ENCODE measurements at regions of chr5 and their contacts with region 1.

Region 1: DNA sequence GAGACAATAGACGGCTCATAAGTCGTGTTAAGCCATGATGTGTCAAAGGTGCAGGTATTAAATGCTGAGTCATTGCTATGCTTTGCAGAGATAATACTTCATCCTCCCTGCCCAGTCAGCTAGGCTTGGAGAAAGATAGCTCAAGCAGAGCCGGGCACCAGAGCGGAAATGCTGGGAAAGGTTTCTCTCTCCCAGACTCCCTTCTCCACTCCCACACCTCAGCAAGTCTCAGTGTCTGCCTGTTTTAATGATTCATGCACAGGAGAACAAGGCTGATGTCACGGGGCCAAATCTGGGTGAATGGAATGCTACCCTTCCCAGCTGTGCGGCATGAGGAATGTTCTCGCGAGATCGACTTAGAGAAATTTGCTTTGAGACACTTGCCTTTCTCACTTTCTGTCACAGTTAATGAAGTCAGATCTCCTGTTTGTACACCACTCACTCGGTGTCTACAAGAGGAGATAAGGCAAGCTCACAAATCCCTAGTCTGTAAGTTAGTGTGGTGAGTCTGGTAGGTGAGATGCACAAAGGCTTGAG is 204.4 kb downstream of the EFNA5 start:
- DNase-seq: no peak
- H3K4me3 ChIP-seq: no peak overlapping the region
- H3K27ac ChIP-seq: no peak overlapping the region
- H3K4me1 ChIP-seq: peaks cover 78% of the 10 kb centered on the region
- CTCF ChIP-seq: no peak

Region 2: GRCh38 chr5:107449369-107449768 is 16.9 kb before region 1 on chr5:
- CTCF ChIA-PET with region 1: no interaction called
- POLR2A ChIA-PET with region 1: interaction called, 68 read pairs
- intact Hi-C with region 1: no loop called
- DNase-seq: peak; percentile 65
- H3K4me3 ChIP-seq: peak overlapping the region; percentile 35
- H3K27ac ChIP-seq: peak overlapping the region; percentile 63
- H3K4me1 ChIP-seq: peaks cover 48% of the 10 kb centered on the region
- CTCF ChIP-seq: no peak

Region 3: DNA sequence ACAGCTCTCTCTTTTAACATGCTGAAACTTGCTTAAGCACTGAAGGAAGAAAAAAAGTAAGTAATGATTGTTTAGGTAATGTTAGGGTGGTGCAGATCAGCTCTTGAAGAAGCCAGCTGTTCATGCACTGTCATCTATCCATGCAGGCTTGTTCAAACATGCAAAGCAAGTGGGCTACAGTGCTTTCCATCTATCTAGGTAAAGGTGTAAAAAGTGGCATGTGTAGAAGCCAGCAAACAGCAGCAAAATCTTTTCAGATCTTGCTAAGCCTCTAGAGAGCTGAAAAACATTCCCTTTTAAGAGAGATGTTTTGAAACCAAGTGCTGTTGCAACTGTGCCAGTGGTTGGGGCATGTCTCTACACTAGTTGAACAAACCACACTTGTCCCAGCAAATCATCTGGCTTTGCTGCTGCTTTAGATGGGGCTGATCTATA is 10.0 kb before region 1 on chr5:
- CTCF ChIA-PET with region 1: interaction called, 4 read pairs
- POLR2A ChIA-PET with region 1: interaction called, 68 read pairs
- intact Hi-C with region 1: no loop called
- DNase-seq: no peak
- H3K4me3 ChIP-seq: no peak overlapping the region
- H3K27ac ChIP-seq: no peak overlapping the region
- H3K4me1 ChIP-seq: peaks cover 55% of the 10 kb centered on the region
- CTCF ChIP-seq: no peak

Region 4: GRCh38 chr5:107476783-107477182 is 10.5 kb after region 1 on chr5:
- CTCF ChIA-PET with region 1: interaction called, 5 read pairs
- POLR2A ChIA-PET with region 1: interaction called, 23 read pairs
- intact Hi-C with region 1: no loop called
- DNase-seq: peak; percentile 71
- H3K4me3 ChIP-seq: no peak overlapping the region
- H3K27ac ChIP-seq: peak overlapping the region; percentile 15
- H3K4me1 ChIP-seq: peaks cover 39% of the 10 kb centered on the region
- CTCF ChIP-seq: no peak